Colonic mucosa (tissue), 4 donors: ENCODE measurements at regions of chr15 and their contacts with region 1.

Region 1: GRCh38 chr15:46280762-46281542 is 646.1 kb downstream of the SQOR start:
- DNase-seq: no peak
- H3K4me3 ChIP-seq: no peak overlapping the region
- H3K27ac ChIP-seq: no peak overlapping the region
- H3K4me1 ChIP-seq: no peaks in the 10 kb centered on the region
- H3K27me3 ChIP-seq: no peaks in the 10 kb centered on the region
- CTCF ChIP-seq: no peak

Region 2: DNA sequence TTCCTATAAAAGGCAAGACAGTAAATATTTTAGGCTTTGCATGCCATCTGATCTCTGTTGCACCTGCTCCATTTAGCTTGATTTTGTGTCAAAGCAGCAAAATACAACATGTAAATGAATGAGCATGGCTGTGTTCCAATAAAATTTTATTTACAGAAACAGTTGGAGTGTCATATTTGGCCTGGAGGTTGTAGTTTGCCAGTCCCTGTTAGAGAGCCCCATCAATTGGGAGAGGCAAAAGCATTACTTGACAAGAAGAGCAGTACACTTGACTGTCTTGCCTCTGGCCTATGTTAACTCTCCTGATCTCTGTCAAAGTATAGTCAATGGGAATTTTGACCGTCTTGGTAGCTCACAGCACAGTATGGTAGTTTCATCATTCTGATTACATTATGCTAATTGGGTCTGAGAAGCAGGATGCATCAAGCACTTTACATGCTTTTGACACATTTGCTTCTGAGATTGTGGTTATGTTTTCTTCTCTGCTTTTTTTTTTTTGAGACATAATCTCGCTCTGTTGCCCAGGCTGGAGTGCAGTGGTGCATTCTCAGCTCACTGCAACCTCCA is 993.5 kb before region 1 on chr15:
- intact Hi-C with region 1: no loop called
- DNase-seq: no peak
- H3K4me3 ChIP-seq: no peak overlapping the region
- H3K27ac ChIP-seq: no peak overlapping the region
- H3K4me1 ChIP-seq: no peaks in the 10 kb centered on the region
- H3K27me3 ChIP-seq: no peaks in the 10 kb centered on the region
- CTCF ChIP-seq: no peak

Region 3: DNA sequence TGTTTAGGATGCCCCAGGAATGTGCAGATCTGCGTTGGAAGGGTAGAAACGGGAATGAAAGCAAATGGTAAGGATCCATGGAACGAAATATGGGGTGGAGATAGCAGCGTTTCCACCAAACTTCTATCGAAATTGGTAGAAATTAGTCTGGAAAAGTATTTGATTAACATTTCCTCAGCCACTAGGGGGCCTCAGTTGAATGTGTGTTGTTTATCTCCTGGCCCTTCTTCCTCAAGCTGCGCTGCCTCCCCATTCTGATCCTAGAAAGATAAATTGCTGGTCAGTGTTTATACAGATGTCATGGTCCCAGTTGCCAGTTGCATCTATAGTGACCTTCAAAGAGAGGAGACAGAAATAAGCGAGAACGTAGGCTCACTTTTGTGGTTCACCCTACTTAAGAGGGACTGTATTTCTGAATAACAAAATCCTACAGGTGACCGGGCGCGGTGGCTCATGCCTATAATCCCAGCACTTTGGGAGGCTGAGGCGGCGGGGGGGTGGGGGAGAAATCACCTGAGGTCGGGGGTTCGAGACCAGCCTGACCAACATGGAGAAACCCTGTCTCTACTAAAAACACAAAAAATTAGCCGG is 189.0 kb before region 1 on chr15:
- intact Hi-C with region 1: loop called (anchors 5 kb)
- DNase-seq: peak; percentile 54
- H3K4me3 ChIP-seq: no peak overlapping the region
- H3K27ac ChIP-seq: no peak overlapping the region
- H3K4me1 ChIP-seq: no peaks in the 10 kb centered on the region
- H3K27me3 ChIP-seq: no peaks in the 10 kb centered on the region
- CTCF ChIP-seq: peak; percentile 33

Region 4: GRCh38 chr15:46413799-46414198 is 132.8 kb after region 1 on chr15:
- intact Hi-C with region 1: no loop called
- DNase-seq: no peak
- H3K4me3 ChIP-seq: no peak overlapping the region
- H3K27ac ChIP-seq: no peak overlapping the region
- H3K4me1 ChIP-seq: no peaks in the 10 kb centered on the region
- H3K27me3 ChIP-seq: no peaks in the 10 kb centered on the region
- CTCF ChIP-seq: no peak

Region 5: DNA sequence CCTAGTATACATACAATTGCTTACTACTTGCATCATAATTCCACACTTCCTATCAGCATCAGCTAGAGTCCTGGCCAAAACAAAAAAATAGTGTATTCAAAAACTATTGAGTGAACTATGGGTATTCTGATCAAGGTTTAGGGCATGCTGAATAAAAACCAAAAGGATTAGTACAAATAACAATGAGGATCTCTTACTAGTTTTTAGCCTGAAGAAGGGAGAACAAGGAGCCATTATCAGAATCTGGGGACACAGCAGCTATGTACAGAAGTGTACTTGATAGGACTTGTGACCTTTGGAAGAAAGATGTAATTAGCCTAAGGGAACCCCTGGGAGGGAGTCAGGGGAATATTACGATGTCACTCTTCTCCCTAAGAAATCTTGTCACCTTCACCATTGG is 186.1 kb after region 1 on chr15:
- intact Hi-C with region 1: no loop called
- DNase-seq: no peak
- H3K4me3 ChIP-seq: no peak overlapping the region
- H3K27ac ChIP-seq: no peak overlapping the region
- H3K4me1 ChIP-seq: no peaks in the 10 kb centered on the region
- H3K27me3 ChIP-seq: no peaks in the 10 kb centered on the region
- CTCF ChIP-seq: no peak